ENCODE measurements at regions of chr3 and their contacts with region 1.

Region 1: GRCh38 chr3:183385698-183386613 is 42.5 kb downstream of the MCF2L2 start:
- DNase-seq: peak; percentile 42 to 60
- ATAC-seq: peak; percentile 90 to 92; a peak in 5 of 6 replicates
- H3K4me3 ChIP-seq: no peak overlapping the region
- H3K27ac ChIP-seq: no peak overlapping the region; a peak in 1 of 6 replicates
- H3K4me1 ChIP-seq: no peaks in the 10 kb centered on the region
- CTCF ChIP-seq: peak; percentile 72
- EP300 ChIP-seq: no peak
- POLR2A ChIP-seq: no peak
- RAD21 ChIP-seq: peak; percentile 85 to 87

Region 2: GRCh38 chr3:182967218-182968204 is 418.4 kb before region 1 on chr3:
- CTCF ChIA-PET with region 1: no interaction called
- POLR2A ChIA-PET with region 1: no interaction called
- DNase-seq: no peak
- ATAC-seq: no peak
- H3K4me3 ChIP-seq: no peak overlapping the region
- H3K27ac ChIP-seq: peak overlapping the region in 1 of 2 experiments; percentile 10; a peak in 1 of 6 replicates
- H3K4me1 ChIP-seq: peaks cover 34% of the 10 kb centered on the region
- CTCF ChIP-seq: no peak
- EP300 ChIP-seq: no peak
- POLR2A ChIP-seq: no peak
- RAD21 ChIP-seq: no peak

Region 3: DNA sequence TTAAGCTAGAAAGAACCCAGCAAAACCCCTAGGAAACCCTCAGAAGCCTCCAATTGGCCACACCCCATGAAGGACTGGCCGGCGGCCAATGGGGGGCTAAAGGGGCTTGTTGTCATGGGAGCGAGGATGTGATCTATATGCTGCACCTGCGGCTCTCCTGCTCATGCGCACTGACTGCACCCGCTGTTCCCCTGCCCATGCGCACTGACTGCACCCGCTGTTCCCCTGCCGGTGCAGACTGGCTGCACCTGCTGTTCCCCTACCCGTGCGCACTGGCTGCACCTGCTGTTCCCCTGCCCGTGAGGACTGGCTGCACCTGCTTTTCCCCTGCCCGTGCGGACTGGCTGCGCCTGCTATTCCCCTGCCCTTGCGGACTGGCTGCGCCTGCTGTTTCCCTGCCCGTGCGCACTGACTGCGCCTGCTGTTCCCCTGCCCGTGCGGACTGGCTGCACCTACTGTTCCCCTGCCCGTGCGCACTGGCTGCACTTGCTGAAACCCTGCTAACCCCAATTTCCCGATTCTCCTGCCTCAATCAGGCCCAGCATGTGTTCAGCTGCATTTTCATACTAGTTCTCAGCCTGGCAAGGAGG is 269.8 kb before region 1 on chr3:
- CTCF ChIA-PET with region 1: interaction called, 66 read pairs
- POLR2A ChIA-PET with region 1: no interaction called
- DNase-seq: peak; percentile 48 to 64
- ATAC-seq: peak; percentile 90 to 94
- H3K4me3 ChIP-seq: peak overlapping the region; percentile 55
- H3K27ac ChIP-seq: peak overlapping the region; percentile 40 to 45; a peak in 2 of 6 replicates
- H3K4me1 ChIP-seq: no peaks in the 10 kb centered on the region
- CTCF ChIP-seq: no peak
- EP300 ChIP-seq: no peak
- POLR2A ChIP-seq: no peak
- RAD21 ChIP-seq: no peak

Region 4: GRCh38 chr3:183122257-183122932 is 263.6 kb before region 1 on chr3:
- CTCF ChIA-PET with region 1: interaction called, 66 read pairs
- POLR2A ChIA-PET with region 1: no interaction called
- DNase-seq: peak; percentile 26 to 34
- ATAC-seq: peak; percentile 60 to 62; a peak in 3 of 6 replicates
- H3K4me3 ChIP-seq: no peak overlapping the region
- H3K27ac ChIP-seq: no peak overlapping the region
- H3K4me1 ChIP-seq: peaks cover 4% of the 10 kb centered on the region; the same call in 1 of the 3 replicates
- CTCF ChIP-seq: peak; percentile 84
- EP300 ChIP-seq: no peak
- POLR2A ChIP-seq: no peak
- RAD21 ChIP-seq: peak; percentile 78 to 87

Region 5: GRCh38 chr3:183178629-183179549 is 207.1 kb before region 1 on chr3:
- CTCF ChIA-PET with region 1: interaction called, 380 read pairs
- POLR2A ChIA-PET with region 1: no interaction called
- DNase-seq: peak; percentile 25 to 36
- ATAC-seq: peak; percentile 66 to 89
- H3K4me3 ChIP-seq: peak overlapping the region; percentile 45
- H3K27ac ChIP-seq: peak overlapping the region in 1 of 2 experiments; percentile 46; a peak in 3 of 6 replicates
- H3K4me1 ChIP-seq: peaks cover 3% of the 10 kb centered on the region; the same call in 1 of the 3 replicates
- CTCF ChIP-seq: peak; percentile 21; the same call in 2 of the 3 replicates
- EP300 ChIP-seq: no peak
- POLR2A ChIP-seq: no peak
- RAD21 ChIP-seq: no peak

Region 6: DNA sequence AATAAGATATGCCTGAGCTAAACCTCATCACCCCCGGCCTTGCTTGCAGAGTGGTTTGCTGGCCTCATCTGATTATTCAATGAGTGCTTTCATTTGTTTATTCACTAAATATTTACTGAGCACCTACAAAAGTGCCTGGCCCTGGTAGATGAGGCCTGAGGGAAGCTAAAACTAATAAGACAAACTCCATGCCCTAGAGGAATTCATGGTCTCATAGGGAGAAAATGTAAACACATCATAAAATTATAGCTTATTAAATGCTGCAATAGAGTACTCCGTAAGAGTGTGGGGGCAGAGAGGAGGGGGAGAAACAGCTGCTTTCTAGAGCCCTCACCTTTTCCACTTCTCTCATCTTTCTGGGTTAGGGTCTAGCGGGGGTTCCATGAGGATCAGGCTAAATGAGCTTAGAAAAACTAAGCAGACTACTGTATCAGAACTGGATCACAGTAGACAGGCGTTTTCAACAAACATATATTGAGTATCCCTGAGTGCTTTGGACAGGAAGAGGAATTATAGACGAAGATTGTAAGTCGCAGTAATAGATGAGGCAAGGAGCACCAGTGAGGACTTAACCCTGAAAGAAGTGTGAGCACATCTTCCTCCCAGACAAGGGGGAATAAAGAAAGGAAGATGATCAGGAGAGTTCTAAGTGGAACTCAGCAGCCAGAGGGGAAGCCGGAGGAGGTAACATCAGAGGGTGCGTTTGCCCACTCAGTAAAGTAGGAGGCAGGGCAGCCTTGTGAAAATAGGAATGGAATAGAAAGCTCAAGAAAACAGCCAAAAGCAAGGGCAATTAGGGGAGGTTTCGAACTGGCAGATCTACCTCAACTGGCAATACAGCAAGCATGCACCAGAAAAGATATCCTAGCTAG is 191.9 kb before region 1 on chr3:
- CTCF ChIA-PET with region 1: interaction called, 380 read pairs
- POLR2A ChIA-PET with region 1: no interaction called
- DNase-seq: no peak
- ATAC-seq: no peak
- H3K4me3 ChIP-seq: no peak overlapping the region
- H3K27ac ChIP-seq: no peak overlapping the region
- H3K4me1 ChIP-seq: no peaks in the 10 kb centered on the region
- CTCF ChIP-seq: no peak
- EP300 ChIP-seq: no peak
- POLR2A ChIP-seq: no peak
- RAD21 ChIP-seq: no peak

Region 7: GRCh38 chr3:183252973-183253901 is 132.7 kb before region 1 on chr3 and contains the start of gene B3GNT5:
- CTCF ChIA-PET with region 1: interaction called, 16 read pairs
- POLR2A ChIA-PET with region 1: interaction called, 5 read pairs
- DNase-seq: peak in 1 of 2 experiments; percentile 46
- ATAC-seq: peak; percentile 64 to 69
- H3K4me3 ChIP-seq: peak within 1 kb of the TSS; percentile 70
- H3K27ac ChIP-seq: peak within 1 kb of the TSS; percentile 79 to 90
- H3K4me1 ChIP-seq: peaks cover 6% of the 10 kb centered on the region; the same call in 1 of the 3 replicates
- CTCF ChIP-seq: no peak
- EP300 ChIP-seq: no peak
- POLR2A ChIP-seq: no peak
- RAD21 ChIP-seq: no peak
- polyA plus RNA-seq, gene B3GNT5: 10.9 and 11.7 TPM in 2 replicates

Region 8: GRCh38 chr3:183374761-183375160 is 11.2 kb before region 1 on chr3:
- CTCF ChIA-PET with region 1: interaction called, 14 read pairs
- POLR2A ChIA-PET with region 1: no interaction called
- DNase-seq: no peak
- ATAC-seq: no peak
- H3K4me3 ChIP-seq: no peak overlapping the region
- H3K27ac ChIP-seq: peak overlapping the region in 1 of 2 experiments; percentile 12; a peak in 1 of 6 replicates
- H3K4me1 ChIP-seq: peaks cover 28% of the 10 kb centered on the region
- CTCF ChIP-seq: no peak
- EP300 ChIP-seq: no peak
- POLR2A ChIP-seq: no peak
- RAD21 ChIP-seq: no peak

Region 9: GRCh38 chr3:183435661-183436060 is 49.7 kb after region 1 on chr3:
- CTCF ChIA-PET with region 1: no interaction called
- POLR2A ChIA-PET with region 1: no interaction called
- DNase-seq: no peak
- ATAC-seq: no peak
- H3K4me3 ChIP-seq: no peak overlapping the region
- H3K27ac ChIP-seq: no peak overlapping the region
- H3K4me1 ChIP-seq: no peaks in the 10 kb centered on the region
- CTCF ChIP-seq: no peak
- EP300 ChIP-seq: no peak
- POLR2A ChIP-seq: no peak
- RAD21 ChIP-seq: no peak